Calu3 (cell line): ENCODE measurements at regions of chr19 and their contacts with region 1.

Region 1: DNA sequence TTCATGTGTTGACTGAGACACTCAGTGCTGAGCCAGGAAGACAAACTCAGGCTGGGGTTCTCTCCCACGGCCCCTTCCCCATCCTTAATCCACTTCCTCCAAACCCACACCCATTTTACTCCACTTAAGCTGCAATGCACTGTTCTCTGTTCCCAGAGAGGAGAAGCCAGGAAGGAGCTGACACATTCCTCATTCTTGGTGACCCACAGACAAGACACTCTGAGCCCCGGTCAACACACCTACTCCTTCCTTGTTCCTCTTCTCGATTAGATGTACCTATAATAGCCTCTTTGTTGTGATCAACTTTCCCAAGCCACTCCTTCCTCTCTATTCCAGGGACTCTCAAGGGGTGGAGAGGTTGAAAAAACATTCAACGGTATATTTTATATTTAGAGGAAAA is 47.1 kb downstream of the INSR start:
- DNase-seq: peak; percentile 13
- H3K4me3 Mint-ChIP-seq: peak overlapping the region; percentile 12
- H3K27ac Mint-ChIP-seq: peak overlapping the region; percentile 94
- H3K4me1 Mint-ChIP-seq: no peaks in the 10 kb centered on the region
- H3K27me3 Mint-ChIP-seq: no peaks in the 10 kb centered on the region
- CTCF ChIP-seq: no peak

Region 2: GRCh38 chr19:7257148-7258034 is 10.2 kb after region 1 on chr19:
- CTCF ChIA-PET with region 1: no interaction called
- intact Hi-C with region 1: loop called (anchors 1 kb)
- DNase-seq: peak; percentile 35
- H3K4me3 Mint-ChIP-seq: no peak overlapping the region
- H3K27ac Mint-ChIP-seq: peak overlapping the region; percentile 69
- H3K4me1 Mint-ChIP-seq: peaks cover 8% of the 10 kb centered on the region
- H3K27me3 Mint-ChIP-seq: no peaks in the 10 kb centered on the region
- CTCF ChIP-seq: no peak